Activated naive CD4-positive, alpha-beta T cell treated with anti-CD3 and anti-CD28 coated beads for 36 hours (primary cell): ENCODE measurements at regions of chr20 and their contacts with region 1.

Region 1: DNA sequence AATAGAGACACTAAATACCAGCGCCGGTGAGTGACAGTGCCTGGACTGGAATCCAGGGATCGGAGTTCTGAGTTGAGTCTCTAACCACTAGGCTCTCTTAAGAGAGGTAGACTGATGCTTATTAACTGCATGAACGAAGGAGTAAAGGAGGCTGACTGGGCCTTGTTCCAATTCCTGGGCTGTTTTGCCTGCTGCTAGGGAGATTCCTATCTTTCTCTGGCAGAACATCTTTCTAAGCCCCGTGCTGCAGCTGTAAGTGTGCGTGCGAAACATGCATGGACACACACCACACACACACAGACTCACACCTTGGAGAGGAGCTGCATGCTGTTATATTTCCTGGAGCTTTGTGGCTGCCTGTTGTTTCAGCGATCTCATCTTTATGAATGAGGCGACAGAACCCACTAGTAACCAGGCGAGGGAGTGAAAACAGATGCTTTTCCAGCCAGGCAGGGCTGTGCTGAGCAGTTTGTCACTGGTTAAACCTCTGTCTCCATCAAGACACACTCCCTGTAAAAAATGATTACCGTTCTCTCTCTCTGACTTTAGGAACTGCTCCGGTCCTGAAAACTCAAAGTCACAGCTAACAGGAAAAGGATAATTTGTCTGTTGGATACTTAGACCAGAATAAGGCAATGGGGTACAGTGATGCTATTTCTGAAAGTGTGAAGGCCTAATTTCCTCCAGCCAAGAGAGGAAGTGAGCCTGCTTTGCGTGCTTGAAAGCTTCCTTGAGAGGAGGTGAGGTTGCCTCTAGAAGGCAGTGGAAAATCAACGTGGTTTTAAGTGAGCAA is 157.4 kb upstream of the ZNF217 start:
- DNase-seq: peak; percentile 66
- H3K4me3 Mint-ChIP-seq: peak overlapping the region; percentile 32
- H3K27ac Mint-ChIP-seq: peak overlapping the region; percentile 91
- H3K4me1 Mint-ChIP-seq: peaks cover 71% of the 10 kb centered on the region
- H3K27me3 Mint-ChIP-seq: no peaks in the 10 kb centered on the region

Region 2: DNA sequence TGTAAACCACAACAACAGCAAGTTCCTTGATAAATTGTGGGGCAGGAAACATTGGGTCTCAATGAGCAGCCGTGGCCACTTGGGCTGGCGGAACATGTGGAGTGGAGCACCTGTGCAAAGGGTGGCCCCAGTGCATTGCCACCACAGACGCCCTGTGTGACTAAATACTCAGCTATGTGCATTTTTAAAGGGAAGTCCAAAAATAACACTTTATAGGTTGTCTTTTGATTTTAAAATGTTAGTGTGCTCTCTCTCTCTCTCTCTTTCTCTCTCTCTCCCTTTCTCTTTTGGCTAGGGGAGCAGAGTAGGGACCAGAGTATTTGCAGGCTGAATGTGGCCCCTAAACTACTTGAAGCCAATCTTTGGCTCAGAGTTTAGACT is 83.0 kb after region 1 on chr20:
- CTCF ChIA-PET with region 1: interaction called, 3 read pairs
- intact Hi-C with region 1: loop called (anchors 1 kb)
- DNase-seq: no peak
- H3K4me3 Mint-ChIP-seq: no peak overlapping the region
- H3K27ac Mint-ChIP-seq: no peak overlapping the region
- H3K4me1 Mint-ChIP-seq: peaks cover 53% of the 10 kb centered on the region
- H3K27me3 Mint-ChIP-seq: no peaks in the 10 kb centered on the region

Region 3: DNA sequence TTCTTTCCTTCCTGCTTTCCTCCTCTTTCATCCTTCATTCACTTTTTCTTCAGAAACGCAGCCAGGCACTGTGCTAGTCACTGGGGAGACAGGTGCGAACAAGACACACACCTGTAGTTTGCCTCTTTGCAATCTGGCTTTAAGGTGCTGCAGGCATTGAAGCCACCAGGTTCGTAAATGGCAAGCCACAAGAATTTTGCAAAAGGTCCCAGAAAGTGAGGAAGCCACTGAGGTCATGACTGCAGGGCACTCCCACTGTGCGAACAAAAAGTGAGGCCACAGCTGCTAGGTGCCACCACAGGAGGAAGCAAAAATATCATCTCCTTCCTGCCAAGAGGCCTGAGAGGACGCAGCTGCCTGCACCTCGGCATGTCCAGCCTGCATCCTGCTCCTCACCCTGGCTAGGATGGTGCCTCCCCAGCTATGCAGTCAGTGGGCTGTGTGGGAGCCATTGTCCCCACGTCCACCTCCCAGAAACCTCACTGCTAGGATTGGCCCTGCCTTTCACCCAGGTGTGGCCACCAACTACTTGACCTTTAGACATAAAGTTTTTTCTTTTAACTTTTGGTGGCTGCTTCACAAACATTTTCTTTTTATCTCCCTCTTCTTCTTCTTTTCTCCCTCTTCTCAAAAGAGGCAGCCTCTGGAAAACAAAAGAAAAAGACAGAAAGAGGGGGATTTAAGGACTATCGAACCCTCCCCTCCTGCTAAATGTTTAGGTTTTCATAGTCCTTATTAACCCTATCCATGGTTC is 88.6 kb after region 1 on chr20:
- CTCF ChIA-PET with region 1: no interaction called
- intact Hi-C with region 1: loop called (anchors 1 kb)
- DNase-seq: peak; percentile 65
- H3K4me3 Mint-ChIP-seq: peak overlapping the region; percentile 51
- H3K27ac Mint-ChIP-seq: peak overlapping the region; percentile 78
- H3K4me1 Mint-ChIP-seq: peaks cover 73% of the 10 kb centered on the region
- H3K27me3 Mint-ChIP-seq: no peaks in the 10 kb centered on the region